ENCODE measurements at regions of chr13 and their contacts with region 1.

Region 1: DNA sequence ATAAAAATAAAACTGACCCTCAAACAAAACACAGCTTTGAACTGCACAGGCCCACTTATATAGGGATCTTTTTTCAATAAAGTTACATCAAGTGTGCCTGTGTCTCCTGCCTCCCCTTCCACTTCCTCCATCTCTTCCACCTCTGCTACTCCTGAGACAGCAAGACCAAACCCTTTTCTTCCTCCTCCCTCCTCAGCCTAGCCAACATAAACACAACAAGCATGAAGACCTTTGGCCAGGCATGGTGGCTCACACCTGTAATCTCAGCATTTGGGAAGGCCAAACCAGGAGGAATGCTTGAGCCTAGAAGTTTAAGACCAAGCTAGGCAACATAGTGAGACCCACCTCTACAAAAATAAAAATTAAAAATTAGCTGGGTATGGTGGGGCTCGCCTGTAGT is 72.6 kb downstream of the ELF1 start:
- DNase-seq: no peak
- ATAC-seq: no peak
- H3K4me3 ChIP-seq: no peak overlapping the region
- H3K4me3 Mint-ChIP-seq: no peak overlapping the region
- H3K27ac ChIP-seq: no peak overlapping the region
- H3K27ac Mint-ChIP-seq: peak overlapping the region in 8 of 9 donors; percentile 58 to 91 (median 74)
- H3K4me1 ChIP-seq: peaks cover 3 to 4% of the 10 kb centered on the region in 2 donors
- H3K4me1 Mint-ChIP-seq: peaks cover 25 to 74% (median 51%) of the 10 kb centered on the region in 7 donors
- H3K27me3 ChIP-seq: no peaks in the 10 kb centered on the region
- H3K27me3 Mint-ChIP-seq: no peaks in the 10 kb centered on the region

Region 2: DNA sequence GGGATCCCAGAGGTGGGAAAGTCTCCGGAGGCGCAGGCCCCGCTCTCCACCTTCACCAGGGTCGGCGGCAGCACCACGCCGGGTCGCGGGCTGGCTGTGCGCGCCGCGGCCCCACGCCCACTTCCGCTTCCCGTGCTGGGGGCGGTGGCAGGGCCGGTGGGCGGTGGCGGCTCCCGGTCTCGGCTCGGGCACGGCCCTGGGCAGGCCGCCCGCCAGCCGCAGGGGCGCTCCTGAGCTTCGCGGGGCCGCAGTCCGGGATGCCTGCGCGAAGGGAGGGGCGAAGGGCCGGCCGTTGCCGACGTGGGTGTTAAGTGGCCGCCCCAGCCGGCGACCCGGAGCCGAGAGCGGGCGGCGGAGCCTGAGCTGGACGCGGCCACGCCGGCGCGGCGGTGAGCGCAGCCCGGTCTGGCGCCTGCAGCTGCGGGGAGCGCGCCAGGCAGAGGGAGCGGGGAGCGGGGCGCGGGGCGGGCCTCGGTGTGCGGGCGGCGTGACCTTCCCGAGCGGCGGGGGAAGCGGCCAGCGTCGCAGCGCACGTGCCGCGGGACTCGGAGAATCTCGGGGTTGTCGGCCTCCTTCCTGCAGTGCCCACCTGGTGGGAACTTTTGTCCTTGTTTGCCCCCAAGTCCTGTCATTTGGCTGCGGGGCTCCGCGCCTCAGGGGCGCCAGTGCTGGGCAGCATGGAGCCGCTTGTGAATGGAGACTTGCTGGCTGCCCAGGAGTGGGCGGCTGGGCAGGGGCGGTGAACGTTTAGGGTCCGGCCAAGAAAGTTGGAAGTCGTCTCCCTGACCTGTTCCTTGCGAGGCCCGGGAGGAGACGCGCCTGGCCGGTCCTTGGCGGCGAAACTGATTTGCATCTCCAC is 157.0 kb before region 1 on chr13 and contains the start of gene SLC25A15:
- CTCF ChIA-PET with region 1: no interaction called
- POLR2A ChIA-PET with region 1: no interaction called
- intact Hi-C with region 1: no loop called
- DNase-seq: peak; percentile 57 to 84 (median 72)
- ATAC-seq: peak; percentile 93
- H3K4me3 ChIP-seq: peak within 1 kb of the TSS; percentile 62
- H3K4me3 Mint-ChIP-seq: peak within 1 kb of the TSS; percentile 73 to 91 (median 82)
- H3K27ac ChIP-seq: peak within 1 kb of the TSS; percentile 75
- H3K27ac Mint-ChIP-seq: peak within 1 kb of the TSS; percentile 71 to 95 (median 82)
- H3K4me1 ChIP-seq: peaks cover 3 to 4% of the 10 kb centered on the region in 2 donors
- H3K4me1 Mint-ChIP-seq: peaks cover 11 to 42% (median 34%) of the 10 kb centered on the region in 7 donors
- H3K27me3 ChIP-seq: no peaks in the 10 kb centered on the region
- H3K27me3 Mint-ChIP-seq: no peaks in the 10 kb centered on the region
- total RNA-seq, gene SLC25A15: 4.3 to 11.8 (median 9.4) TPM

Region 3: GRCh38 chr13:40933508-40934204 is 12.8 kb before region 1 on chr13:
- CTCF ChIA-PET with region 1: no interaction called
- POLR2A ChIA-PET with region 1: interaction called, 3 read pairs
- intact Hi-C with region 1: loop called in 1 of 2 experiments (anchors 2 kb)
- DNase-seq: peak in 2 of 9 donors; percentile 5 to 13
- ATAC-seq: peak; percentile 31
- H3K4me3 ChIP-seq: no peak overlapping the region
- H3K4me3 Mint-ChIP-seq: peak overlapping the region in 8 of 10 donors; percentile 11 to 61 (median 26)
- H3K27ac ChIP-seq: peak overlapping the region; percentile 6
- H3K27ac Mint-ChIP-seq: peak overlapping the region; percentile 54 to 89 (median 75)
- H3K4me1 ChIP-seq: peaks cover 3 to 8% of the 10 kb centered on the region in 2 donors
- H3K4me1 Mint-ChIP-seq: peaks cover 12 to 59% (median 48%) of the 10 kb centered on the region in 7 donors
- H3K27me3 ChIP-seq: no peaks in the 10 kb centered on the region
- H3K27me3 Mint-ChIP-seq: no peaks in the 10 kb centered on the region

Measured in naive thymus-derived CD4-positive, alpha-beta T cell (primary cell).